PC-9 (cell line): ENCODE measurements at regions of chr10 and their contacts with region 1.

Region 1: GRCh38 chr10:59906417-59907202 is at the start of gene CCDC6:
- DNase-seq: peak; percentile 84 to 96
- H3K4me3 ChIP-seq: peak within 1 kb of the TSS; percentile 94
- H3K27ac ChIP-seq: peak within 1 kb of the TSS; percentile 97
- H3K4me1 ChIP-seq: peaks cover 52% of the 10 kb centered on the region
- H3K27me3 ChIP-seq: no peaks in the 10 kb centered on the region
- CTCF ChIP-seq: peak; percentile 66
- total RNA-seq, gene CCDC6: 66.2 and 91.9 TPM in 2 replicates

Region 2: GRCh38 chr10:59654007-59654406 is 252.6 kb before region 1 on chr10:
- CTCF ChIA-PET with region 1: no interaction called
- POLR2A ChIA-PET with region 1: no interaction called
- intact Hi-C with region 1: no loop called
- DNase-seq: no peak
- H3K4me3 ChIP-seq: no peak overlapping the region
- H3K27ac ChIP-seq: no peak overlapping the region
- H3K4me1 ChIP-seq: no peaks in the 10 kb centered on the region
- H3K27me3 ChIP-seq: no peaks in the 10 kb centered on the region
- CTCF ChIP-seq: no peak

Region 3: GRCh38 chr10:59678884-59679301 is 227.7 kb before region 1 on chr10:
- CTCF ChIA-PET with region 1: no interaction called
- POLR2A ChIA-PET with region 1: no interaction called
- intact Hi-C with region 1: no loop called
- DNase-seq: peak; percentile 55 to 86
- H3K4me3 ChIP-seq: no peak overlapping the region
- H3K27ac ChIP-seq: peak overlapping the region; percentile 15
- H3K4me1 ChIP-seq: 0 out of 2 replicates have a peak, but pooled peaks cover 6% of the 10 kb centered on the region
- H3K27me3 ChIP-seq: no peaks in the 10 kb centered on the region
- CTCF ChIP-seq: no peak

Region 4: GRCh38 chr10:59808896-59809643 is 97.5 kb before region 1 on chr10:
- CTCF ChIA-PET with region 1: no interaction called
- POLR2A ChIA-PET with region 1: no interaction called
- intact Hi-C with region 1: loop called (anchors 5 kb)
- DNase-seq: peak; percentile 63 to 66
- H3K4me3 ChIP-seq: no peak overlapping the region
- H3K27ac ChIP-seq: no peak overlapping the region
- H3K4me1 ChIP-seq: no peaks in the 10 kb centered on the region
- H3K27me3 ChIP-seq: no peaks in the 10 kb centered on the region
- CTCF ChIP-seq: peak; percentile 85

Region 5: DNA sequence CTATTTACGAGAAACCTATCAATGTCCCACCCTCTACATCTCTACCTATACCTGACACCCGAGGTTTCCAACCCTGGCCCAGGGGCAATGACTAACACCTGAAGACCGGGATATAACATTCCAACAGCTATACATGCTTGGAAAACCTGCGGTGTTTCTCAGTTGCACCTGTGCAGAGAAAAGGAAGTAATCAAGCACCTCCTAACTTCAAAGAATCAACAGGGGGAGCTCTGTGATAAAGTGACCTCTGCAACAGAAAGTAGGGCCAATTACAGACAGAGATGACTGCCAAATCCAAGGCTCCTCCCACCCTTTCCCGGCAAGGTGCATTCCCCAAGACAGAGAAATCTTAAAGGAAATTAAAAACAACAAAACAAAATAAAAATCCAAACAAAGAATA is 41.5 kb before region 1 on chr10:
- CTCF ChIA-PET with region 1: interaction called, 15 read pairs
- POLR2A ChIA-PET with region 1: interaction called, 6 read pairs
- intact Hi-C with region 1: loop called (anchors 1 kb)
- DNase-seq: peak; percentile 79 to 94
- H3K4me3 ChIP-seq: no peak overlapping the region
- H3K27ac ChIP-seq: peak overlapping the region; percentile 46
- H3K4me1 ChIP-seq: peaks cover 24% of the 10 kb centered on the region
- H3K27me3 ChIP-seq: no peaks in the 10 kb centered on the region
- CTCF ChIP-seq: peak; percentile 57; the same call in 1 of the 2 replicates

Region 6: GRCh38 chr10:59965976-59966650 is 59.5 kb after region 1 on chr10:
- CTCF ChIA-PET with region 1: no interaction called
- POLR2A ChIA-PET with region 1: interaction called, 18 read pairs
- intact Hi-C with region 1: loop called (anchors 1 kb)
- DNase-seq: no peak
- H3K4me3 ChIP-seq: no peak overlapping the region
- H3K27ac ChIP-seq: peak overlapping the region; percentile 42
- H3K4me1 ChIP-seq: peaks cover 64% of the 10 kb centered on the region
- H3K27me3 ChIP-seq: no peaks in the 10 kb centered on the region
- CTCF ChIP-seq: no peak

Region 7: DNA sequence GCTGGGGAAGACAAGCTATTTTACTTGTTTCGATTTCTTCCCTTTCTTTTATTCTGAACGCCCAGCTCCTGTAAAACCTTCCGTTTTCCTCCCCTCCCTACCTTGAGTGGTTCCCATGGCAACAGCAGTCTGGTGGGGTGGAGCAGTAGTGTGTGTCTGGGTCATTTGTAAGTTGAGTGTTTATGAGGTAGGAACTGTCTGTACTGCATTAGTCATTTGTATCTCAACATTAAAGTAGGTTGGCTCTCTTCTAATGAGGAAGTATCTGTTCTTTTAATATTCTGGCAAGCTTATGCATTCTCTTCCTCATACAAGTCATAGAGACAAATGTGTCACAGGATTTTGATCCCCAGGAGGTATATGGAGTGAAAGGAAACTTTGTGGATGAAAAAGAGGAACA is 85.1 kb after region 1 on chr10:
- CTCF ChIA-PET with region 1: no interaction called
- POLR2A ChIA-PET with region 1: interaction called, 4 read pairs
- intact Hi-C with region 1: loop called (anchors 1 kb)
- DNase-seq: peak; percentile 84 to 98
- H3K4me3 ChIP-seq: peak overlapping the region; percentile 38; the same call in 1 of the 2 replicates
- H3K27ac ChIP-seq: peak overlapping the region; percentile 91
- H3K4me1 ChIP-seq: peaks cover 37% of the 10 kb centered on the region
- H3K27me3 ChIP-seq: no peaks in the 10 kb centered on the region
- CTCF ChIP-seq: no peak

Region 8: DNA sequence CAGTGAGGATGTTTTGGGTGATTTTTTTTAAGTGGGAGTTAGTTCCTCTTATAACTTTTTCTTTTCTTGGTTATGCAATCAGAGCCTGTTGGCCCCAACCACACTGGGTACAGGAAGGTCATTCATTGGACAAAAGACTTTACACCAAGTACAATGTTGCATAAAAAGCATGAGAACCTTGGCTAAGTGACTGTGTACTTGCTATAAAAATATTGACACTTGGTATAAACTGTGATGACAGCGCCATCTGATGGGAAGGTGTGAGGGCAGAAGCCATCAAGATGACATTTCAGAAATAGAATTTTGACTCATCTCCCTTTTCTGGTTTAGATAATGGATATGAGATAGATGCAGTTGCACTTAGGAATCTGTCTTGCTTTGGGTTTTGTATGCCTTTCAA is 126.1 kb after region 1 on chr10:
- CTCF ChIA-PET with region 1: interaction called, 5 read pairs
- POLR2A ChIA-PET with region 1: no interaction called
- intact Hi-C with region 1: loop called (anchors 1 kb)
- DNase-seq: peak; percentile 41 to 64
- H3K4me3 ChIP-seq: no peak overlapping the region
- H3K27ac ChIP-seq: no peak overlapping the region
- H3K4me1 ChIP-seq: peaks cover 17% of the 10 kb centered on the region
- H3K27me3 ChIP-seq: no peaks in the 10 kb centered on the region
- CTCF ChIP-seq: peak; percentile 76